CD4-positive, alpha-beta T cell (primary cell): ENCODE measurements at regions of chr3 and their contacts with region 1.

Region 1: GRCh38 chr3:128617557-128618397 is 32.8 kb downstream of the RPN1 start:
- DNase-seq: peak; percentile 94 to 100 (median 99)
- ATAC-seq: peak; percentile 92
- H3K4me3 ChIP-seq: peak overlapping the region; percentile 99
- H3K4me3 Mint-ChIP-seq: peak overlapping the region; percentile 98
- H3K27ac ChIP-seq: peak overlapping the region; percentile 89 to 91
- H3K27ac Mint-ChIP-seq: peak overlapping the region; percentile 96
- H3K4me1 ChIP-seq: peaks cover 28% of the 10 kb centered on the region
- H3K4me1 Mint-ChIP-seq: peaks cover 29% of the 10 kb centered on the region
- H3K27me3 ChIP-seq: no peaks in the 10 kb centered on the region
- H3K27me3 Mint-ChIP-seq: no peaks in the 10 kb centered on the region
- CTCF ChIP-seq: peak; percentile 96

Region 2: GRCh38 chr3:128650096-128651050 is 32.6 kb after region 1 on chr3 and contains the start of gene RPN1:
- CTCF ChIA-PET with region 1: interaction called, 18 read pairs
- POLR2A ChIA-PET with region 1: interaction called, 13 read pairs
- intact Hi-C with region 1: loop called (anchors 1 kb)
- DNase-seq: peak; percentile 89 to 97 (median 94)
- ATAC-seq: peak; percentile 96
- H3K4me3 ChIP-seq: peak within 1 kb of the TSS; percentile 99
- H3K4me3 Mint-ChIP-seq: peak within 1 kb of the TSS; percentile 95
- H3K27ac ChIP-seq: peak within 1 kb of the TSS; percentile 89 to 93
- H3K27ac Mint-ChIP-seq: peak within 1 kb of the TSS; percentile 90
- H3K4me1 ChIP-seq: peaks cover 29% of the 10 kb centered on the region
- H3K4me1 Mint-ChIP-seq: peaks cover 45% of the 10 kb centered on the region
- H3K27me3 ChIP-seq: no peaks in the 10 kb centered on the region
- H3K27me3 Mint-ChIP-seq: no peaks in the 10 kb centered on the region
- CTCF ChIP-seq: no peak
- total RNA-seq, gene RPN1: 67.7 to 72.6 TPM

Region 3: GRCh38 chr3:128725932-128726690 is 108.3 kb after region 1 on chr3 and contains the start of gene RAB7A:
- CTCF ChIA-PET with region 1: interaction called, 11 read pairs
- POLR2A ChIA-PET with region 1: interaction called, 3 read pairs
- intact Hi-C with region 1: loop called in 1 of 2 experiments (anchors 2 kb)
- DNase-seq: peak; percentile 94 to 99 (median 97)
- ATAC-seq: peak; percentile 98
- H3K4me3 ChIP-seq: peak within 1 kb of the TSS; percentile 77
- H3K4me3 Mint-ChIP-seq: peak within 1 kb of the TSS; percentile 100
- H3K27ac ChIP-seq: peak within 1 kb of the TSS; percentile 64 to 78
- H3K27ac Mint-ChIP-seq: peak within 1 kb of the TSS; percentile 97
- H3K4me1 ChIP-seq: peaks cover 47% of the 10 kb centered on the region
- H3K4me1 Mint-ChIP-seq: peaks cover 57% of the 10 kb centered on the region
- H3K27me3 ChIP-seq: no peaks in the 10 kb centered on the region
- H3K27me3 Mint-ChIP-seq: no peaks in the 10 kb centered on the region
- CTCF ChIP-seq: no peak
- total RNA-seq, gene RAB7A: 113 to 121 TPM

Region 4: GRCh38 chr3:128794770-128795649 is 177.2 kb after region 1 on chr3:
- CTCF ChIA-PET with region 1: interaction called, 5 read pairs
- POLR2A ChIA-PET with region 1: interaction called, 8 read pairs
- intact Hi-C with region 1: loop called in 1 of 2 experiments (anchors 2 kb)
- DNase-seq: peak; percentile 42 to 86 (median 54)
- ATAC-seq: peak; percentile 98
- H3K4me3 ChIP-seq: no peak overlapping the region
- H3K4me3 Mint-ChIP-seq: peak overlapping the region; percentile 31
- H3K27ac ChIP-seq: peak overlapping the region in 1 of 2 donors; percentile 8
- H3K27ac Mint-ChIP-seq: peak overlapping the region; percentile 79
- H3K4me1 ChIP-seq: peaks cover 44% of the 10 kb centered on the region
- H3K4me1 Mint-ChIP-seq: peaks cover 58% of the 10 kb centered on the region
- H3K27me3 ChIP-seq: no peaks in the 10 kb centered on the region
- H3K27me3 Mint-ChIP-seq: no peaks in the 10 kb centered on the region
- CTCF ChIP-seq: peak; percentile 77